Ascending aorta (tissue), 2 donors: ENCODE measurements at regions of chr5 and their contacts with region 1.

Region 1: GRCh38 chr5:179559284-179560252 is 9.2 kb downstream of the RUFY1 start:
- DNase-seq: peak; percentile 91 to 99
- H3K4me3 ChIP-seq: peak overlapping the region; percentile 61 to 68
- H3K27ac ChIP-seq: peak overlapping the region; percentile 75 to 81
- H3K4me1 ChIP-seq: peaks cover 3 to 6% of the 10 kb centered on the region in 2 donors
- H3K27me3 ChIP-seq: no peaks in the 10 kb centered on the region
- CTCF ChIP-seq: no peak

Region 2: GRCh38 chr5:179265514-179266290 is 293.9 kb before region 1 on chr5:
- intact Hi-C with region 1: loop called (anchors 10 kb)
- DNase-seq: peak; percentile 86 to 99
- H3K4me3 ChIP-seq: peak overlapping the region in 1 of 2 donors; percentile 48
- H3K27ac ChIP-seq: peak overlapping the region; percentile 73 to 75
- H3K4me1 ChIP-seq: peaks cover 18 to 33% of the 10 kb centered on the region in 2 donors
- H3K27me3 ChIP-seq: no peaks in the 10 kb centered on the region
- CTCF ChIP-seq: no peak

Region 3: DNA sequence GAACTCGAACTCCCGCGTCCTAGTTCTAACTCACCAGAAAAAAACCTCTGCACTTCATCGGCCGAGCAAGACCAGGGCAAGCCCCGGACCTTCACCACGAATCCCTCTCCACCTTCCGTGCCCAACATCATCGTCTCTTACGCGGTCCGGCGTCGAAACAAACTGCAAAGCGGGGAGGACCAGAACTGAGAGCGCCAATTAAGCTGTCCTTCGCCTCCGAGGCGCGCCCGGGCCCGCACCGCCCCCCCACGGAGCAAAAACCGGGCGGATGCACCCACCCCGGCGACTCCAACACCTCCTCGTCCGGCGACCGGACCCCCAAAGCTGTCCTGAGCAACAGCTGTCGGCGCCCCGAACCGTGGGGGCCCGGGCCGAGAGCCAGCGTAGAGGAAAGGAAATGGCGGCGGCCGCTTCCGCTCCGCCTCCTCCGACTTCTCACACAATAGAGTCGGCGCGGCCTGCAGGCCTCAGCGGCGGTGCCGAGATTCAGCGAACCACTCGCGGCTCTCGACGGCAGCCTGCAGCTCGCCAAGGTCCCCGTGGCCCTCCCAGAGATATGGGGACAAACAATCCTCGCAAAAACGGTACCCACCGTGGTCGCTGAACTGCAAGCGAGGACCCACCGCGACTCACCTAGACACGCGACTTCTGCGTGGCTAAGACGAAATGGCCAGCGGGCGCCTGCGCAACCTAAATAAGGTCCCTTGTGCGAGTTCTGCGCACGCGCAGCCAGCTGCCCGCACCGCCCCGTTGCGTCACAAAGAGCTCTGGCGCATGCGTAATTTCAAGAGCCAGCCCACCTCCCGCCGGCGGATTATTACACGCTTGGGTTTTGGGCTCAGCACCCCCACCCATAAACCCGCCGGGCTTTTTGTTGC is 63.7 kb after region 1 on chr5 and contains the start of gene HNRNPH1:
- intact Hi-C with region 1: loop called (anchors 2 kb)
- DNase-seq: peak; percentile 93 to 99
- H3K4me3 ChIP-seq: peak within 1 kb of the TSS; percentile 99 to 100
- H3K27ac ChIP-seq: peak within 1 kb of the TSS; percentile 100
- H3K4me1 ChIP-seq: peaks cover 0 to 40% of the 10 kb centered on the region in 2 donors
- H3K27me3 ChIP-seq: no peaks in the 10 kb centered on the region
- CTCF ChIP-seq: peak in 1 of 3 experiments; percentile 5
- total RNA-seq, gene HNRNPH1: 206 TPM

Region 4: DNA sequence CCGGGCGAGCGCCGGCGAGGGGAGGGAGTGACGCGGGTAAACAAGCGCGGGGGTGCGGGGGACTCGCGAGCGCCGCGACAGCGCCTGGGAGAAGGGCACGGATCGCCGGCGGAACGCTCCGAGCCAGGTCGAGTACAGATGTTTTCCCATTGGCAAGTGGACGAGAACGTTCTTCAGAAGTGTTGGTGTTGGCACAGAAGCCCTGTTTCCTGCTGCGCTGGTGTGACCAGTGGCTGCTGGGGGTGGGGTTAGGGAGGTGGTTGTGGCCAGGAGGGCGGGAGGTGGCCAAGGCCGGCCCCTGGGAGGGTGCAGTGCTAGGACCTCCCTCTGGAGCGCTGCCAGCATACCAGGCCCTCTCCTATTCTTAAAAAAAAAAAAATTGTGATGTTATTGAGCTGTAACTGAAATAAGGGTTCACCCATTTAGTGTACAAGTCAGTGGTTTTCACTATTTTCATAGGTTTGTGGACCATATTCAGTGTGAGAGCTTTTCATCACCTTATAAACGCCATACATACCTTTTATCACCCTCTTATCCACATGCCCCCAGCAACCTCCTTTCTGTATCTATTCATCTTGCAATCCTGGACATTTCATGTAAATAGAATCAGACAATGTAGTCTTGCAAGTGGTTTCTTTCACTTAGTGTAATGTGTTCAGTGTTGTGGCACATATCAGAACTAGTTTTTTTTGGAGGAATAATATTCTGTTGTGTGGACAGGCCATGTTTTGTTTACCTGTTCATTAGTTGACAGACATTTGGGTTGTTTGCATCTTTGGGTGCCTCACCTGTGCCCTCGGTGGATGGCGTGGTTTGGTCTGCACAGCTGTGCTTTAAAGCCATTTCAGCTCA is 262.2 kb after region 1 on chr5:
- intact Hi-C with region 1: loop called (anchors 5 kb)
- DNase-seq: peak; percentile 90 to 98
- H3K4me3 ChIP-seq: peak overlapping the region; percentile 84 to 98
- H3K27ac ChIP-seq: peak overlapping the region; percentile 98 to 100
- H3K4me1 ChIP-seq: peaks cover 34 to 47% of the 10 kb centered on the region in 2 donors
- H3K27me3 ChIP-seq: no peaks in the 10 kb centered on the region
- CTCF ChIP-seq: peak in 1 of 3 experiments; percentile 19

Region 5: GRCh38 chr5:180494060-180494509 is 934.5 kb after region 1 on chr5 and contains the start of gene CNOT6:
- intact Hi-C with region 1: loop called (anchors 10 kb)
- DNase-seq: peak; percentile 68 to 94
- H3K4me3 ChIP-seq: peak within 1 kb of the TSS; percentile 94 to 95
- H3K27ac ChIP-seq: peak within 1 kb of the TSS; percentile 84 to 98
- H3K4me1 ChIP-seq: peaks cover 4 to 15% of the 10 kb centered on the region in 2 donors
- H3K27me3 ChIP-seq: no peaks in the 10 kb centered on the region
- CTCF ChIP-seq: no peak
- total RNA-seq, gene CNOT6: 12.0 TPM